Activated CD8-positive, alpha-beta T cell treated with anti-CD3 and anti-CD28 coated beads, Interleukin-2, amount 10 ng/mL, durations not matched to agents 7 days and 5 days (primary cell): ENCODE measurements at regions of chr19 and their contacts with region 1.

Region 1: GRCh38 chr19:8412783-8413628 is at the start of gene MARCHF2:
- DNase-seq: peak; percentile 96
- ATAC-seq: peak; percentile 100
- H3K4me3 Mint-ChIP-seq: peak within 1 kb of the TSS; percentile 60
- H3K27ac Mint-ChIP-seq: no peak within 1 kb of the TSS
- H3K4me1 Mint-ChIP-seq: peaks cover 13% of the 10 kb centered on the region
- H3K27me3 Mint-ChIP-seq: no peaks in the 10 kb centered on the region
- total RNA-seq, gene MARCHF2: 26.8 to 28.1 TPM

Region 2: GRCh38 chr19:8321060-8321985 is 91.7 kb before region 1 on chr19 and contains the starts of genes NDUFA7 and RPS28:
- CTCF ChIA-PET with region 1: no interaction called
- POLR2A ChIA-PET with region 1: no interaction called
- DNase-seq: peak; percentile 98
- ATAC-seq: peak; percentile 93
- H3K4me3 Mint-ChIP-seq: peak within 1 kb of the TSS; percentile 100
- H3K27ac Mint-ChIP-seq: peak within 1 kb of the TSS; percentile 100
- H3K4me1 Mint-ChIP-seq: peaks cover 47% of the 10 kb centered on the region
- H3K27me3 Mint-ChIP-seq: no peaks in the 10 kb centered on the region
- total RNA-seq, gene NDUFA7: 56.0 to 63.8 TPM
- total RNA-seq, gene RPS28: 1,476 to 1,561 TPM

Region 3: GRCh38 chr19:8444645-8445487 is 31.9 kb after region 1 on chr19 and contains the start of gene HNRNPM:
- CTCF ChIA-PET with region 1: interaction called, 18 read pairs
- POLR2A ChIA-PET with region 1: interaction called, 11 read pairs
- DNase-seq: peak; percentile 100
- ATAC-seq: peak; percentile 96
- H3K4me3 Mint-ChIP-seq: peak within 1 kb of the TSS; percentile 94
- H3K27ac Mint-ChIP-seq: peak within 1 kb of the TSS; percentile 92
- H3K4me1 Mint-ChIP-seq: peaks cover 40% of the 10 kb centered on the region
- H3K27me3 Mint-ChIP-seq: no peaks in the 10 kb centered on the region
- total RNA-seq, gene HNRNPM: 283 to 291 TPM

Region 4: GRCh38 chr19:8468761-8469373 is 55.9 kb after region 1 on chr19:
- CTCF ChIA-PET with region 1: no interaction called
- POLR2A ChIA-PET with region 1: no interaction called
- DNase-seq: no peak
- ATAC-seq: peak; percentile 28
- H3K4me3 Mint-ChIP-seq: no peak overlapping the region
- H3K27ac Mint-ChIP-seq: peak overlapping the region; percentile 37
- H3K4me1 Mint-ChIP-seq: peaks cover 36% of the 10 kb centered on the region
- H3K27me3 Mint-ChIP-seq: no peaks in the 10 kb centered on the region

Region 5: GRCh38 chr19:8487137-8487851 is 74.3 kb after region 1 on chr19:
- CTCF ChIA-PET with region 1: interaction called, 11 read pairs
- POLR2A ChIA-PET with region 1: no interaction called
- DNase-seq: peak; percentile 80
- ATAC-seq: peak; percentile 86
- H3K4me3 Mint-ChIP-seq: peak overlapping the region; percentile 35
- H3K27ac Mint-ChIP-seq: peak overlapping the region; percentile 90
- H3K4me1 Mint-ChIP-seq: peaks cover 48% of the 10 kb centered on the region
- H3K27me3 Mint-ChIP-seq: no peaks in the 10 kb centered on the region

Region 6: DNA sequence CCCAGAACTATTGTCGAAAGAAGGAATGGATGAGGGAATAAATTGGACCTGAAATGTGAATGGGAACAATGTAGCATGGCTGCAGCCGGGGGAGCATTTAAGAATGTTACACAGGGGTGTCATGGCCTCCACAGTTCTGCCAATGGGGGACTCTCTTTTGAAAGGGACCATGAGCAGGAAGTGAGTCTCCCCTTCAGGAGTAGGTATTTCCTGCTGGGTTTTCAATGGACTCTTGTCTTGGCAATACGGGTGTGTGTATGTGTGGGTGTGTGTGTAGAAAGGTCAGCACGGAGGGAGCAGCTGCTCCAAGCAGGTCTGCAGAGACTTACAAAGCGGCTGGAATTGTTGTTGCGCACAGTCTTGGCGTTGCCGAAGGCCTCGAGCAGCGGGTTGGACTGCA is 139.8 kb after region 1 on chr19:
- CTCF ChIA-PET with region 1: no interaction called
- POLR2A ChIA-PET with region 1: no interaction called
- DNase-seq: no peak
- ATAC-seq: no peak
- H3K4me3 Mint-ChIP-seq: no peak overlapping the region
- H3K27ac Mint-ChIP-seq: peak overlapping the region; percentile 52
- H3K4me1 Mint-ChIP-seq: peaks cover 11% of the 10 kb centered on the region
- H3K27me3 Mint-ChIP-seq: no peaks in the 10 kb centered on the region

Region 7: DNA sequence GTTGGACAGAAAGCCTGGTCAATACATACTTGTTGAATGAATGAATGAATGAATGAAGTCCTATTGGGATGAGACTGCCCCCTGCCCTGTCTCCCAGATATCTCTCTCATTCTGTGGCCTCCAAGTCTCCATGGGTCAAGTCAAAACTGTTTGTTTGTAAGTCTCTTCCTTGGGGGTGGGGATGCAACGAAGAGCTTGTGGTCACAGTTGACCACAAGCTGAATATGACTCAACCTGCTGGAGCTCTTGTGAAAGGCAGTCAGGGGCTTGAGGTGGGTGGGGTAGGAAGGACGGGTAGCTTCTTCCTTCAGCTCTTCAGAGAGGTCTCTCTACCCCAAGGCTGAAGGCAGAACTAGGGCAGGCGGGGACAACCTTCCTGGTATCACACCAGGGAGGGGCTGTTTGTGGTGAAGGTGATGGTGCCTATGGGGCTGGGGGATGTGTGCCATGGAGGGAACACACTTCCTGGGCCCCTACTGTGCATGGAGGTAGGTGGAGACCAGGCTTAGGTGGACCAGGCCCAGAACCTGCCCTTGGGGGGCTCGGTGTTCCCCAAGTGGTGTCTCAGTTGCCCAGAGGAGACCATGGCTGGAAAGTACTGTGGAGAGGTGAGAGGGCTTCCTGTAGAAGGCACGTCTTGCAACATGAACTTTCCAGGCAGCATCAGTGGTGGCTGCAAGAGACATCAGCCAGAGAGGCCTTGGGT is 156.2 kb after region 1 on chr19:
- CTCF ChIA-PET with region 1: no interaction called
- POLR2A ChIA-PET with region 1: no interaction called
- DNase-seq: peak; percentile 91
- ATAC-seq: peak; percentile 86
- H3K4me3 Mint-ChIP-seq: peak overlapping the region; percentile 65
- H3K27ac Mint-ChIP-seq: peak overlapping the region; percentile 95
- H3K4me1 Mint-ChIP-seq: peaks cover 84% of the 10 kb centered on the region
- H3K27me3 Mint-ChIP-seq: no peaks in the 10 kb centered on the region